PC-3 (cell line): ENCODE measurements at regions of chr1 and their contacts with region 1.

Region 1: DNA sequence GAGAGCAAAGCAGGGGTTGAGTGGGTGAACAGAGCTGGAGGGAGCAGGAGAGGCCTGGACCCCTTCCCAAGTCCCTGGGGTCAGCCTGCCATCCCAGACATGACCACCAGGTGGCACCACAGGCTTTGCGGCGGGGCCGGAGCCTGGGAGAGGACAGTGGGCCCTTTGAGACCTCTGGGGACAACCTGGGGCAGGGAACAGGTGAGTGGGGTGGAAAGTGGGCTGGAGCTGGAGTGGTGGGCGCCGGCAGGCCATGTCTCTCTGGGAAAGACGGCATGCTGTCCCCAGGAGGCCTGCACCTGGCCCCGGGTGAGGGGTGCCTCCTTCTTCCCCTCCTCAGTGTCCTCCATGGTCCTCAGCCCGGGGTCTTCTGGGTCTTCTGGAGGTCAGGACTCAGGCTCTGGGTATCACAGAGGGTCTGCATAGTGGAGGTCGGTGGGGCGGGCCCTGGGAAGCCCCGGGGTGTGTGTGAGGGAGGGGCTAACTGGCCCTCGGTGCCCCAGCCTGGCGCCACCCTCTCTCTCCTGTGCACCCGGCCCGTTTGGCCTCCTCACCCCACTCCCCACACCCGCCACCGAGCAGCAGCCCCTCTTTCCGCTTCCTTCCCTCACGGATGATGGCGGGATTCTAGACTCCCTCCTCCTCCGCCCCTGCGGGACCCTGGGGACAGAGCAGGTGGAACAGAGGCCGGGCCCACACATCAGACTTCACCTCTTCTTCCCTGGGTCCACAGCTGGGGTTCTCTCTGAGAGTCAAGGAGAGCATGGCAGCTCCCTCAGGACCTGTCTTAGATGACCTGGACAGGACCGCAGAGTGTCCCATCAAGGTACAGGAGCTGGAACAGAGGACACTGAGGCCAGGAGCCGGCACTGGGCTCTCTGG is 28.4 kb upstream of the PKP1 start:
- DNase-seq: peak; percentile 98
- ATAC-seq: peak; percentile 87
- H3K4me3 ChIP-seq: no peak overlapping the region
- H3K27ac ChIP-seq: no peak overlapping the region
- H3K4me1 ChIP-seq: no peaks in the 10 kb centered on the region
- H3K27me3 ChIP-seq: no peaks in the 10 kb centered on the region
- CTCF ChIP-seq: peak; percentile 100

Region 2: DNA sequence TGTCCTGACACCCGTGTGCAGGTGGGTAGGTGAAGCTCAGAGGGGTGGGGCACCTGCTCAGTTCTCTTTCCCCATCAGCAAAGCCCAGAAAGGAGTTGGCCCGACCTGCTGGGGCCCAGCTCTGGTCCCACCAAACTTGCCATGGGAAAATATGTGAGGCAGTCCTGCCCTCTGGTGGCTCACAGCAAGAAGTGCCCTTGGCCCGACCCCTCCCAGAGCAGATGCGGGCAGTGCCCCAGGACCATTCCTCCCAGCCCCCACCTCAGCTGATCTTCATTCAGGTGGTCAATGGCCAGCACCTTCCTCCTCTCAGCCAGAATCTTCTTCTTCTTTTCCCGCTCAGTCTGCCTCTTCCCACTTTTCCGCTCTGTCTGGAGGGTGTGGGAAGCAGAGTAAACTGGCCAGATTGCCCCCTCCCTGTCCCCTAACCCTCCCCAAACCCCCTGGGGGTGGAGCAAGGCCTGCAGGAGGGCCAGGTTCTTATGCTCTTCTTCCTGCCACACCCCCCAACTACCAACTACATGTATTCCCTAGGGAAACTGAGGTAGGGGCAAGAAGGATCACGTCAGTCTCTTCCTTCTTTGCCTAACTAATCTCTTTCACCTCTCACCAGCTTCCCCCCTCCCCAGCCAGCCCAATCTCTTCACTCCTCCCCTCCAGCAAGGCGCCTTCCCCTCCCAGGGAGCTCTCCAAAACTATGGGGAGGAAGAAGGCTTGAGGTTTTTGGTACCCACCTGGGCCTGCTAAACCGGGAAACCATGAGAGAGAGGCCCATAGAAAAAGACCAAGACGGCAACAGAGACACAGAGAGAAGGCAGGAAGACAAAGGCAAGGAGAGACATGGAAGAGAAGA is 107.0 kb after region 1 on chr1:
- CTCF ChIA-PET with region 1: interaction called, 13 read pairs
- POLR2A ChIA-PET with region 1: no interaction called
- intact Hi-C with region 1: loop called (anchors 1 kb)
- DNase-seq: peak; percentile 93
- ATAC-seq: peak; percentile 83
- H3K4me3 ChIP-seq: no peak overlapping the region
- H3K27ac ChIP-seq: no peak overlapping the region
- H3K4me1 ChIP-seq: no peaks in the 10 kb centered on the region
- H3K27me3 ChIP-seq: peaks cover 8% of the 10 kb centered on the region
- CTCF ChIP-seq: peak; percentile 100